SK-N-SH (cell line): ENCODE measurements at regions of chr4 and their contacts with region 1.

Region 1: DNA sequence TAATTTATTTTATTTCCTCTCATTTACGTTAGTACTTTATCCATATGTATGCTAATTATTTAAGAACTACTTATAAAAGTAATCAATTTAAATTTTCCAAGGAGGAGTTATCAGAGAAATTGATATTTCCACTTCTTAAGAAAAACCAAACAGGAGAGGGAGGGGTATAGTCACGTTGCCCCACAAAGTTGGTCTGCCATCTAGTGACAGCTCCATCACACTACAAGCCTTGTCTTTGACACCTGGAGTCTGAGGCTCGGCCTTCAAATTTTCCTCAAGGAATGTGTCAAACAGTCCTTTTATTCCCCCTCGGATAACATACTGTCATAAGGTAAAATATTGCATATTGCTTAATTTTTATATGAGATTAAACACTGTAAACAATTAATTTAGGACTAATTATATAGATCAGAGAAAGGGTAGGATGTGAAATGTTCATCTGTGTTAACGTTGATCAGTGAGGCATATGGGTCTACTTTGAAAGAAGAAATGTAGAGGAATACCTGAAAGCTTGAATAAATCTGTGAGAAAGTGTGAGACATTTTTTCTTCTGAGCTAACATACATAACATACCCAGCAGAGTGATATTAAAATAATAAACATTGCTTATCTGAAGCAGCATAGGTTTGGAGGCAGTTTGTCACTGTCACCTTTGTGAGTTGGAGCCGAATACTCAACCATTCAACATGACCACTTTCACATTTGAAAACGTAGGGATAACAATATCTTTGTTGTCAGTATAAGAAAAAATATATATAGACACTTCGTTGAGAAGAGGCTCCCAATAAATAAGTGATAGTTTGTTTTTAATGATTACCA is 114.4 kb downstream of the GLRA3 start:
- DNase-seq: peak; percentile 60
- H3K4me3 ChIP-seq: no peak overlapping the region; a peak in 1 of 4 replicates
- H3K27ac ChIP-seq: no peak overlapping the region
- H3K4me1 ChIP-seq: no peaks in the 10 kb centered on the region
- H3K27me3 ChIP-seq: no peaks in the 10 kb centered on the region; the same call in 1 of the 2 replicates
- CTCF ChIP-seq: peak; percentile 77
- EP300 ChIP-seq: no peak
- RAD21 ChIP-seq: peak; percentile 67

Region 2: DNA sequence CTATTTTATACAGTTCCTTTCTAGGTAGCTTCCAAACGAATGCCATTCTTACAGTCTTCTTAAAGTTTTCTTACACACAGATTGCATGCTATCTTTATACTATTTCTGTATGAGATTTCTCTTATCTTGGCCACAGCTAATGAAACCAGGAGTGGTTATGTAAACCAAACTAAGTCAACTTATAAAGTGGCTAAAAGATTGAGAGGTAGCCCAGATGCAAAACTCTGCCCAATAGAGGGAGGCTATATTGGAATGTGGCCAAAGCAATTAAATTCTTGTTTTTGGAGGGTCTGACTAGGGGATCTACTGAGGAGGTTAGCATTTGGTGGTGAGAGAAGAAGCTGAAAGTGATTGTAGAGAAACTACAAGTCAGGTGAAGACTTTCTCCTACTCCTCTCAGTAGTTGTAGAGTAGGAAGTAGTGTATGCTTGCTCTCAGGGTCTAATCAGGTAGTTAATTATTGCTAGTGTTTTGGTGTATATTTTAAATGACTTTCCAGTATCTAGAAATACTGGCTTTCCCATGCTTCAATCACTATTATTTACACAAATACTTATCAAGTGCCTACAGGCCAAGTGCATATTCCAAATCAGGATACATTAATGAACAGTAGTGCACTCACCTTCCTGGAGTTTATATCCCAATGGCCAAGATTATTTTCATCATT is 88.1 kb before region 1 on chr4:
- CTCF ChIA-PET with region 1: no interaction called
- POLR2A ChIA-PET with region 1: no interaction called
- DNase-seq: no peak
- H3K4me3 ChIP-seq: no peak overlapping the region
- H3K27ac ChIP-seq: no peak overlapping the region
- H3K4me1 ChIP-seq: no peaks in the 10 kb centered on the region
- H3K27me3 ChIP-seq: no peaks in the 10 kb centered on the region
- CTCF ChIP-seq: no peak
- EP300 ChIP-seq: no peak
- RAD21 ChIP-seq: no peak

Region 3: DNA sequence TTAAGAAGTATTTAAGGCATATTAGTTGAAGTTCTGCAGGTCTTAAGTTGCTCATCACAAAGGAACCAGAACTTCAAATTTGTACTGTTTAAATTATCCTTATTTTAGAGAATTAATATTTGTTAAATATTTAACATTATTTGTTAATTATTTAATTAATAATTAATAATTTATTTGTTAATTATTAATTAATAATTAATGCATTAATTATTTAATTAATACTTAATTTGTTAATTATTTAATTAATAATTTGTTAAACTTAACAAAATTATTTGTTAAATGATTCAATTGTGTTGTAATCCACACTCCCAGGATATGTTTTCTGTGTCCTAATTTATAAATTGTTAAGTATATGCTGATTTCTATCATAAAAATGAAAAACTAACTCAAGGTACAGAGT is 14.9 kb before region 1 on chr4:
- CTCF ChIA-PET with region 1: interaction called, 16 read pairs
- POLR2A ChIA-PET with region 1: no interaction called
- DNase-seq: no peak
- H3K4me3 ChIP-seq: no peak overlapping the region
- H3K27ac ChIP-seq: no peak overlapping the region
- H3K4me1 ChIP-seq: no peaks in the 10 kb centered on the region
- H3K27me3 ChIP-seq: no peaks in the 10 kb centered on the region
- CTCF ChIP-seq: no peak
- EP300 ChIP-seq: no peak
- RAD21 ChIP-seq: no peak